ENCODE measurements at regions of chr20 and their contacts with region 1.

Region 1: DNA sequence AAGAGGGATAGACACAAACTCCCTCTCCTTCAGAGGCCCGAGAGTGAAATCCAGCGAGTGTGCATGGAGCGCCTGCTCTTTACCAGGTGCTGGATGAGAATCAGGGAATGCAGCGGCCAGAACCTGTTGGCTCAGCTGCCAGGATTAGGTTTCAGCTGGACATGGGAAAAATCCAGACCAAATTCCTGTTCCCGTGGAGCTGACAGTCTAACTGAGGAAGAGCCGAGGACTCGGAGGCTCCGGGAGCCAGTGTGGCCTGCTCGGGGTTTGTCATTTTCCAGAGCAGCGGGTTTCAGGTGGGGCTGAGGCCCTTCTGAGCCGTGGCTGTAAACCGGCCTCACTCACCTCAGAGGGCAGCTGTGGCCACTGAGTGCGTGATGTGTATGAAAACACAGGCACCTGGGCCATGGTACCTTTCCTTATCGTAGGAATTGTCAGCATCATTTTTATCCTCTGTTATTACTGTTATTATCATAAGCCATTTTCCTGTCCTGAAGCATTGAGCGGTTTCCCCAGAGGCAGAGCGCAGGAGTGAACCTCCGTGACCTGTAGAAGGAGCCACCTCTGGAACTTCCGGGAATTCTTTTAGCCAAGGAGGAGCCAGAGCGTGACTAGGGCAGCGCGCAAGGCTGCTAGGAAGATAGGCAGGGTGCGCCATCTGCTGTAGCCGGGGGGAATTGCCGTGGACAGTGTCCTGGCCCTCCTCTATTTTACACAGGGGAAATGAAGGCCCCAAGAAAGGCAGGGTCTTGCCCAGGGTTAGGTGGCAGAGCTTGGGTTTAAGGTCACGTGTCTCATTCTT is 27.3 kb downstream of the PKIG start:
- DNase-seq: peak; percentile 94
- H3K4me3 ChIP-seq: peak overlapping the region; percentile 24; the same call in 1 of the 2 replicates
- H3K27ac ChIP-seq: peak overlapping the region; percentile 22; the same call in 1 of the 2 replicates
- H3K4me1 ChIP-seq: peaks cover 15% of the 10 kb centered on the region
- H3K27me3 ChIP-seq: no peaks in the 10 kb centered on the region

Region 2: GRCh38 chr20:44210422-44211176 is 399.1 kb before region 1 on chr20 and contains the start of gene OSER1:
- in situ Hi-C with region 1: loop called (anchors 25 kb)
- DNase-seq: peak; percentile 99
- H3K4me3 ChIP-seq: peak within 1 kb of the TSS; percentile 97
- H3K27ac ChIP-seq: peak within 1 kb of the TSS; percentile 92
- H3K4me1 ChIP-seq: peaks cover 33% of the 10 kb centered on the region
- H3K27me3 ChIP-seq: no peaks in the 10 kb centered on the region
- total RNA-seq, gene OSER1: 29.5 and 36.2 TPM in 2 replicates

Region 3: GRCh38 chr20:44398303-44398702 is 211.4 kb before region 1 on chr20:
- in situ Hi-C with region 1: loop called (anchors 10 kb)
- DNase-seq: peak; percentile 91
- H3K4me3 ChIP-seq: no peak overlapping the region
- H3K27ac ChIP-seq: no peak overlapping the region
- H3K4me1 ChIP-seq: peaks cover 8% of the 10 kb centered on the region; the same call in 1 of the 2 replicates
- H3K27me3 ChIP-seq: peaks cover 7% of the 10 kb centered on the region